Activated B cell treated with CpG ODN at 0.5 μM for 24 hours (primary cell): ENCODE measurements at regions of chr2 and their contacts with region 1.

Region 1: GRCh38 chr2:60439219-60439974 is 114.1 kb downstream of the BCL11A start:
- DNase-seq: peak; percentile 72
- ATAC-seq: peak; percentile 93
- H3K4me3 Mint-ChIP-seq: peak overlapping the region; percentile 76
- H3K27ac Mint-ChIP-seq: peak overlapping the region; percentile 99
- H3K4me1 Mint-ChIP-seq: peaks cover 83% of the 10 kb centered on the region
- H3K27me3 Mint-ChIP-seq: no peaks in the 10 kb centered on the region
- CTCF ChIP-seq: no peak

Region 2: GRCh38 chr2:60337140-60337494 is 102.3 kb before region 1 on chr2:
- CTCF ChIA-PET with region 1: interaction called, 5 read pairs
- POLR2A ChIA-PET with region 1: interaction called, 12 read pairs
- intact Hi-C with region 1: no loop called
- DNase-seq: no peak
- ATAC-seq: peak; percentile 80
- H3K4me3 Mint-ChIP-seq: peak overlapping the region; percentile 32
- H3K27ac Mint-ChIP-seq: peak overlapping the region; percentile 95
- H3K4me1 Mint-ChIP-seq: peaks cover 65% of the 10 kb centered on the region
- H3K27me3 Mint-ChIP-seq: no peaks in the 10 kb centered on the region
- CTCF ChIP-seq: no peak

Region 3: DNA sequence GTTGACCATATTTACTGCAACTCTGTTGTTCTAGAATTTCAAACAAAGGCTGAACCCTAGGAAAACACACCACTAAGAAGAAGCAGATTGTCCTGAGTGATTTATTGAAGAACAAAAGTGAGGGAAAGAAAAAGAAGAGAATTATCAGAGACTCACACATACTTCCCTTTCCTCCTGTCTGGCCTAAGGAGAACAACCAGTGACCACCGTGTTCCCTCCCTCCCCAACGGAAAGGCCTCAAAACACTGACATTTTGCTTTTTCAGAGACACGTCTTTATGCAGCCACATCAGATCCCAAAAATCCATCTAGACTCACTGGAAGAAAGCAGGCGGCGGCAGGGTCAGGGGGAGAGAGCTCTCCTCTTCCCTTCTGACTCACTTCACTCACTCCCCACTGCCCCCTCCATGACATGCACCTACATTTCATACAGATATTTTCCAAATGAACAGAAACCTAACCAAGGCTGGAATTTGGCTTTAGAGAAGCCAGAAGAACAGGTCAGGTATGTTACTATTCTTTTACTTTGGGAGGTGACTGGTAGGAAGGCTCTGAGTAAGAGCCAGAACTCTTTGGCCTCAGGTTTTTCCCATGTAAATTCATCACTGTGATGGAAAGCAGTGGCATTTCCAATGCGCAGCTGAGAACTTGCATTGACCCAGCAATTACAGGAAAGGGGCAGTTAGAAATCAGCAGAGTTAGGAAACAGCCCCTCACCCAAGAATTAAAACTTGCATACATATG is 55.8 kb before region 1 on chr2:
- CTCF ChIA-PET with region 1: no interaction called
- POLR2A ChIA-PET with region 1: no interaction called
- intact Hi-C with region 1: no loop called
- DNase-seq: no peak
- ATAC-seq: no peak
- H3K4me3 Mint-ChIP-seq: no peak overlapping the region
- H3K27ac Mint-ChIP-seq: peak overlapping the region; percentile 46
- H3K4me1 Mint-ChIP-seq: peaks cover 46% of the 10 kb centered on the region
- H3K27me3 Mint-ChIP-seq: no peaks in the 10 kb centered on the region
- CTCF ChIP-seq: no peak

Region 4: GRCh38 chr2:60413814-60414168 is 25.6 kb before region 1 on chr2:
- CTCF ChIA-PET with region 1: interaction called, 7 read pairs
- POLR2A ChIA-PET with region 1: interaction called, 22 read pairs
- intact Hi-C with region 1: loop called (anchors 1 kb)
- DNase-seq: peak; percentile 41
- ATAC-seq: peak; percentile 72
- H3K4me3 Mint-ChIP-seq: peak overlapping the region; percentile 8
- H3K27ac Mint-ChIP-seq: peak overlapping the region; percentile 90
- H3K4me1 Mint-ChIP-seq: peaks cover 87% of the 10 kb centered on the region
- H3K27me3 Mint-ChIP-seq: no peaks in the 10 kb centered on the region
- CTCF ChIP-seq: no peak

Region 5: GRCh38 chr2:60498816-60499429 is 59.5 kb after region 1 on chr2:
- CTCF ChIA-PET with region 1: interaction called, 5 read pairs
- POLR2A ChIA-PET with region 1: interaction called, 8 read pairs
- intact Hi-C with region 1: loop called (anchors 1 kb)
- DNase-seq: peak; percentile 40
- ATAC-seq: peak; percentile 64
- H3K4me3 Mint-ChIP-seq: peak overlapping the region; percentile 64
- H3K27ac Mint-ChIP-seq: peak overlapping the region; percentile 84
- H3K4me1 Mint-ChIP-seq: peaks cover 99% of the 10 kb centered on the region
- H3K27me3 Mint-ChIP-seq: no peaks in the 10 kb centered on the region
- CTCF ChIP-seq: no peak

Region 6: GRCh38 chr2:60515721-60516226 is 76.4 kb after region 1 on chr2:
- CTCF ChIA-PET with region 1: interaction called, 5 read pairs
- POLR2A ChIA-PET with region 1: interaction called, 12 read pairs
- intact Hi-C with region 1: loop called (anchors 2 kb)
- DNase-seq: peak; percentile 57
- ATAC-seq: peak; percentile 76
- H3K4me3 Mint-ChIP-seq: peak overlapping the region; percentile 68
- H3K27ac Mint-ChIP-seq: peak overlapping the region; percentile 91
- H3K4me1 Mint-ChIP-seq: peaks cover 97% of the 10 kb centered on the region
- H3K27me3 Mint-ChIP-seq: no peaks in the 10 kb centered on the region
- CTCF ChIP-seq: no peak